Dorsolateral prefrontal cortex (tissue), 120 donors: ENCODE measurements at regions of chr6 and their contacts with region 1.

Region 1: DNA sequence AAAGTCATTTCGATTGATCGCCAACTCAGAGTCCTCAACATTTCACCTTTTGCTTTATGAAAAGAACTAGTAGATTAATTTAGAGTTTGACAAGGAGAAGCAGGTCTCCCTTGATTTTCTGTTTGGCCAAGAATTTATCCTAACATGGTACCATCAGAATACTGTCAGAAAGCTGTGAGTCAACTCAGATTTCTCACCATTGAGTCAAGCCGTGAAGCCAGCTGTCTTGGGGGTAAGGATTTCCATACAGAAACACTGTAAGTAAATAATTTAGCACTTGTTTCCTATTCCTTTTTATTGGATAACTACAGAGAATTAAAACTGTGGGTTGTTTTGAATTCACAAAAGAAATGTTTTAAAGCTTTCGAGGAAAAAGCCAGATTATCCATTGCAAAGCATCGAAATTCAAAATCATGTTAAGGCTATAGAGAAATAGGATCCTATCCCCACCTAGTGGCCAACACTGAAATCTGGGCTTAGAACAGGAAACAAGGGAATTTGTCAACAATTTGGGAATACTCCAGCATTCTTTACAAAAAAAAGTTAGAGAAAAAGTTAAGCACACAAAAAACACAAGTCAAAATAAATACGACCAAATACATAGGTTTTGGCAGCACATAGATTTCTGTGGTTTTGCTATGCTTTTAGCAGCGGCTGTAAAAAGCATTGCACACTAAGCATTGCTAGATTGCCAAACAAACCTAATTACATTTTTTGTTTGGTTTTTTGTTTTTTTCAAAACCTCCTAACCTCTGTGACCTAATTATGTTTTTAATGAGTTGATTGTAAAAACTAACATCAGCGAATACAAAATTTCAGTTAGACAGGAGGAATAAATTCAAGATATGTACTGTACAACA is 44.2 kb downstream of the COL11A2 start:
- DNase-seq: peak in 2 of 10 donors; percentile 34 to 49
- H3K4me3 ChIP-seq: no peak overlapping the region
- H3K27ac ChIP-seq: no peak overlapping the region
- H3K27me3 ChIP-seq: peaks cover 0 to 26% (median 2%) of the 10 kb centered on the region in 45 donors
- CTCF ChIP-seq: peak; percentile 63 to 92 (median 82)

Region 2: DNA sequence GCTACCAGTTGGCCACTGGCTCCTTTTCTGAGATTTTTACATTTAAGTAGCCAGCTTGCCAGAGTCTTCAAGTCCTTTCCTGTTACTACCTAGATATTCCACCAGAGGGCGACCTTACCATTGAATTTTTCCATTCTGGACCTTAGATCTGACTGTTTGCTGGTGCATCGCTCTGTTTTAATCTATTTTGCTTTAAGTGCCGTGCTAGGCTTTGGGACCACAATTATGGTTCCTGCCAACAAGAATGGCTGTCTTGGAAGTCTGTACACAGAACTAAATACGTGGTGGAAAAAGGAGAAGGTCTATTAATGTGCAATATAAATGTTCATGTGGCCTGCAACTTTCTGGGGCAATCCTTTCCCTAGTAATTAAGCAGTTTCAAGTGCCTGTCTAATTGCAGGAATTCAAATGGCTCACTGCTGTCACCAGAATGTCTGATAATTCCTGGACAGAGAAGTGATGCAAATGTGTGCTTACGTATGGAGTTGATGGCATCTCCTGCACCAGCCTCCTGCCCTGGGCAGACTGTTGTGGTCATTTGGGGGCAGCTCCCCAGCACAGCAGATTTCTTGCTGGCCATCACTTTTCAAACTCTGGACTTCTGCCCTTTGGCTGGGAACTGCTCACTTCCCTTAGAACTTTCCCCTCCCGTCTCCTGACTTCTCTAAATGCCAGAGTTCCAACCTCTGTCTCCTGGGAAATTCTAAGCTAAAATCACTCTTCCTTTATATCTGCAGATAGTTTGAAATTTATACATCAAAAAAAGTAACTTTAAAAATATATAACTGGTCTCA is 133.0 kb before region 1 on chr6:
- intact Hi-C with region 1: loop called (anchors 2 to 10 kb)
- DNase-seq: peak in 2 of 10 donors; percentile 44 to 63
- H3K4me3 ChIP-seq: no peak overlapping the region
- H3K27ac ChIP-seq: peak overlapping the region in 1 of 59 donors; percentile 3
- H3K27me3 ChIP-seq: peaks cover 0 to 28% (median 3%) of the 10 kb centered on the region in 45 donors
- CTCF ChIP-seq: peak; percentile 77 to 98 (median 90)

Region 3: GRCh38 chr6:33040157-33040556 is 107.9 kb before region 1 on chr6:
- intact Hi-C with region 1: no loop called
- DNase-seq: no peak
- H3K4me3 ChIP-seq: no peak overlapping the region
- H3K27ac ChIP-seq: no peak overlapping the region
- H3K27me3 ChIP-seq: peaks cover 0 to 5% (median 0%) of the 10 kb centered on the region in 45 donors
- CTCF ChIP-seq: no peak

Region 4: DNA sequence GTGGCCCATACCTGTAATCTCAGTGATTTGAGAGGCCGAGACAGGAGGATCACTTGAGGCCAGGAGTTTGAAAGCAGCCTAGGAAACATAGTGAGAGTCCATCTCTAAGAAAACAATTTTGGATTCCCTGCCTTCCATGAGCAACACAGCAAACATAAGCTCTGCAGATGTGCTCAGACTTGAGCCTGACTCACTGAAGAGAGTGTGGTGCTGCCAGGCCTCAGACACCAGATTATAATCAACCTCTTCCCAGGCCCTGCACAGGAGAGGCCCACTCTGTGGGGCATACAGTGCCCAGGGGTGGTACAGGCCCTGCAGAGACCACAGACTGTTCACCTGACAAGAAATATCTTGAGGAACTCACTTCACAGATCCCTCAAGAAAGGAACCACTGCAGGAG is 52.4 kb before region 1 on chr6:
- intact Hi-C with region 1: no loop called
- DNase-seq: no peak
- H3K4me3 ChIP-seq: no peak overlapping the region
- H3K27ac ChIP-seq: no peak overlapping the region
- H3K27me3 ChIP-seq: peaks cover 0 to 7% (median 0%) of the 10 kb centered on the region in 45 donors
- CTCF ChIP-seq: no peak

Region 5: GRCh38 chr6:33118525-33119123 is 29.4 kb before region 1 on chr6:
- intact Hi-C with region 1: loop called in 1 of 2 experiments (anchors 2 kb)
- DNase-seq: no peak
- H3K4me3 ChIP-seq: peak overlapping the region in 6 of 59 donors; percentile 47 to 59 (median 54)
- H3K27ac ChIP-seq: no peak overlapping the region
- H3K27me3 ChIP-seq: peaks cover 0 to 42% (median 25%) of the 10 kb centered on the region in 45 donors
- CTCF ChIP-seq: peak; percentile 73 to 97 (median 91)